CD8-positive, alpha-beta T cell (primary cell): ENCODE measurements at regions of chr16 and their contacts with region 1.

Region 1: GRCh38 chr16:2459647-2460390 is at the start of gene TEDC2:
- DNase-seq: peak; percentile 92 to 98 (median 98)
- ATAC-seq: peak; percentile 100
- H3K4me3 ChIP-seq: peak within 1 kb of the TSS; percentile 54 to 62
- H3K4me3 Mint-ChIP-seq: peak within 1 kb of the TSS; percentile 82
- H3K27ac ChIP-seq: peak within 1 kb of the TSS in 1 of 2 experiments; percentile 8
- H3K27ac Mint-ChIP-seq: peak within 1 kb of the TSS; percentile 64
- H3K4me1 ChIP-seq: peaks cover 9% of the 10 kb centered on the region
- H3K4me1 Mint-ChIP-seq: peaks cover 6% of the 10 kb centered on the region
- H3K27me3 ChIP-seq: no peaks in the 10 kb centered on the region
- H3K27me3 Mint-ChIP-seq: no peaks in the 10 kb centered on the region
- CTCF ChIP-seq: no peak
- total RNA-seq, gene TEDC2: 0.30 to 0.69 TPM

Region 2: DNA sequence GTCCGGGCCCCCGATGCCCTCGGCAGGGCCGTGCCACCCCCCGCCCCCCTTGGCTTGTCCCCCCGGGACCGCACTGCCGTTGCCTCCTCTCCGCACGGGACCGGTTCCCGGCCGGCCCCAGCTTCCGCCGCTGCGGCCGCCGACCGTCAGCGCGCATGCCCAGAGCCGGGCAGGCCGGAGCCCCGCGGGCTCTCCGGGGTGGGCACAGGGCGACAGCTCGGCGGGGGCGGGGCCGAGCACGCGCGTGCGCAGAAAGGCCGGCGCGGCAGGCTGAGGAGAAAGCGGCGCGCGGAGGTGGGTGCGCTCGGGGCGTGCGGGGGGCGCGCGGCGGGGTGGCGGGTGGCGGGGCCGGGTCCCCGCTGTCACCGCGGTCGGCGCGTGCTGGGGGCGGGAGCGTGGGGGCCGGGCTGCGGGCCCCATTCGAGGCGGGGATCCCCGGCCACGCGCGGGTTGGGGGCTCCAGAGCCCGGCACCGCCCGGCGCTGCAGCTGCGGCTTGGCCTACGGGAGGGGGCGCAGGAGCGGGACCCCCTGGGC is 15.1 kb after region 1 on chr16 and contains the start of gene TBC1D24:
- CTCF ChIA-PET with region 1: interaction called, 3 read pairs
- POLR2A ChIA-PET with region 1: interaction called, 6 read pairs
- intact Hi-C with region 1: loop called in 1 of 2 experiments (anchors 1 kb)
- DNase-seq: peak; percentile 48 to 89 (median 77)
- ATAC-seq: peak; percentile 61
- H3K4me3 ChIP-seq: peak within 1 kb of the TSS; percentile 62 to 70
- H3K4me3 Mint-ChIP-seq: peak within 1 kb of the TSS; percentile 77
- H3K27ac ChIP-seq: peak within 1 kb of the TSS in 1 of 2 experiments; percentile 36
- H3K27ac Mint-ChIP-seq: no peak within 1 kb of the TSS
- H3K4me1 ChIP-seq: peaks cover 29% of the 10 kb centered on the region
- H3K4me1 Mint-ChIP-seq: peaks cover 24% of the 10 kb centered on the region
- H3K27me3 ChIP-seq: peaks cover 11 to 20% of the 10 kb centered on the region in 2 experiments
- H3K27me3 Mint-ChIP-seq: peaks cover 15% of the 10 kb centered on the region
- CTCF ChIP-seq: no peak
- total RNA-seq, gene TBC1D24: 2.8 to 3.8 TPM